ENCODE measurements at regions of chr11 and their contacts with region 1.

Region 1: DNA sequence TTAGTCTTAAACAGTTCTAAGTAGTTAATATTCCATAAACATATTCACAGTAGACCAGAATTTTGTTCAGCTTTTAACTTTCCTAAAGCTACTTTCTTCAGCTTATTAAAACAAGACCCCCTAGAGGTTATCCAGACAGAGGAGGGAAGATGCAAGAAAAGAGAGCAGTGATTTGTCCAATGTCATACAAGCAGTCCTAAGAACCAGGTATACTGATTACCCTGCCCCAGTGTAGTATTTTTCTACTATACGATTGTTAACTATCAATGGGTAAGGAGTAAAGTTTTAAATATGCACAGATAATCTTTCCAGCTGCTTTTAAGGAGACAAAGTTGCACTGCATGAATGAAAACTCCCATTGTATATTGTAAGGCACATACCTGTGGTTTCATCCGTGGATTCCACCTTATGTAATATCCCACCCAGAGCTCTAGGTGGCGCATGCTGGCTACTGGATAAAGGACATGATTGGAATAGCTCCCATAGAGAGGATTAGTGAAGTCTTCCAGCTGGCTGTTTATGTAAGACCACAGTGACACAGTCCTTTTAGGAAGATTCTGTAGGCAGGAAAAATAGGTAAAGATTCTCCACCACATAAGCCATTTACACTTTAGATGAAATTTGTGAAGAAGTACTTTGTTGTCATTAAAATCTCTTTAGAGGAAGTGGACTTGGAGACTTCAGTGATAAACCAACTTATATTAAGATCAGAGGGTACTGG is 45.6 kb downstream of the CEP57 start:
- DNase-seq: peak; percentile 93
- H3K4me3 ChIP-seq: no peak overlapping the region
- H3K27ac ChIP-seq: no peak overlapping the region
- H3K27me3 ChIP-seq: no peaks in the 10 kb centered on the region
- CTCF ChIP-seq: peak; percentile 88

Region 2: DNA sequence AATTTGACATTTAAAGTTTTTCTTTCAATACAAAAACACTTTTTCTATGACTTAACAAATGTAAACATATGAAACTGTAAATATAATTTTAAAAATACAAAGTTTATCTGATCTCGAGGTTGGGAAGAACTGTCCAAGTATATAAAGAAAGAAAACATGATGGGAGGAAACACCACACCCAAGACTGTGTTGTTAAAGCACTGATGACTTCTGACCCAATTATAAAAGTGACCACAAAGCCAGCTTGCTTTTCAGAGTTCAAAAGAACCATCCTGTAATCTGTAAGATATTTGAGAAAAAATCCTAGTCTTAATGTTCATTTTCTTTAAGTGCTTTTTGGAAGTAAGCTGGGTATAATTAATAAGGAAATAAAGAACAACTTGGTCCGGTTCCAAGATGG is 30.1 kb before region 1 on chr11:
- CTCF ChIA-PET with region 1: no interaction called
- POLR2A ChIA-PET with region 1: no interaction called
- DNase-seq: no peak
- H3K4me3 ChIP-seq: no peak overlapping the region
- H3K27ac ChIP-seq: no peak overlapping the region
- H3K27me3 ChIP-seq: no peaks in the 10 kb centered on the region
- CTCF ChIP-seq: no peak

Region 3: GRCh38 chr11:95849087-95849825 is 13.3 kb after region 1 on chr11:
- CTCF ChIA-PET with region 1: interaction called, 27 read pairs
- POLR2A ChIA-PET with region 1: no interaction called
- DNase-seq: no peak
- H3K4me3 ChIP-seq: no peak overlapping the region
- H3K27ac ChIP-seq: no peak overlapping the region
- H3K27me3 ChIP-seq: no peaks in the 10 kb centered on the region
- CTCF ChIP-seq: peak; percentile 39

Region 4: GRCh38 chr11:96037405-96037936 is 201.5 kb after region 1 on chr11:
- CTCF ChIA-PET with region 1: interaction called, 6 read pairs
- POLR2A ChIA-PET with region 1: interaction called, 14 read pairs
- DNase-seq: no peak
- H3K4me3 ChIP-seq: no peak overlapping the region
- H3K27ac ChIP-seq: no peak overlapping the region
- H3K27me3 ChIP-seq: no peaks in the 10 kb centered on the region
- CTCF ChIP-seq: 0 out of 2 replicates have a peak, but pooled peaks have one; percentile 8

Region 5: GRCh38 chr11:96162816-96163499 is 327.0 kb after region 1 on chr11:
- CTCF ChIA-PET with region 1: interaction called, 13 read pairs
- POLR2A ChIA-PET with region 1: no interaction called
- DNase-seq: peak; percentile 76
- H3K4me3 ChIP-seq: peak overlapping the region; percentile 10; the same call in 1 of the 2 replicates
- H3K27ac ChIP-seq: peak overlapping the region; percentile 87
- H3K27me3 ChIP-seq: no peaks in the 10 kb centered on the region
- CTCF ChIP-seq: no peak

Region 6: GRCh38 chr11:96389720-96390487 is 554.0 kb after region 1 on chr11 and contains the starts of genes CCDC82 and JRKL:
- CTCF ChIA-PET with region 1: interaction called, 36 read pairs
- POLR2A ChIA-PET with region 1: no interaction called
- DNase-seq: peak; percentile 87
- H3K4me3 ChIP-seq: peak within 1 kb of the TSS; percentile 91
- H3K27ac ChIP-seq: peak within 1 kb of the TSS; percentile 91
- H3K27me3 ChIP-seq: no peaks in the 10 kb centered on the region
- CTCF ChIP-seq: no peak
- polyA plus RNA-seq, gene CCDC82: 11.9 and 20.4 TPM in 2 replicates
- polyA plus RNA-seq, gene JRKL: 8.1 and 11.2 TPM in 2 replicates